ENCODE measurements at regions of chr13 and their contacts with region 1.

Region 1: DNA sequence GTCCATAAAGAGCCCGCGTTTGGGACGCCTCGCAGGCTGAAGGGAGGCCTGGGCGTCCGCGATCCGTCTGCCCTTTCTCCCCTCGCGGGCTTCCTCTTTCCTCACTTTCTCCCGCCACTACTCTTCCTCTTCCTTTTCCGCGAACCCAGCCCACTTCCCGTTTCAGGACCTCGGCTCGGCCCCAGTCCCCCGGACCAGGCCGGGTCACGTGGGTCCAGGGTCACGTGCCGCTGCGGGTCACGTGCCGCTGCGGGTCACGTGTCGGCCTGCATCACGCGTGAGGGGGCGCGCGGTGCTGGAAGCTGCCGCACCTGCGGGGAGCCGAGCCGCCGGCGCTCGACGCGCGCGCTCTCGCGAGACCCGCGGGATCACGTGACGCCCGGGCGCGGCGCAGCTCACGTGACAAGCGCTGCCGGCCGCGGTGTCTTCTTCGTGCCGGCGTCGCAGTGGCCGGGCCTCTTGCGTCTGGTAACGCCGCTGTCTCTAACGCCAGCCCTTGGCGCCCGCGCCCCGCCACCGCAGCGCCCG is at the start of gene LAMP1:
- DNase-seq: peak; percentile 99
- ATAC-seq: peak; percentile 88
- H3K4me3 Mint-ChIP-seq: peak within 1 kb of the TSS; percentile 89
- H3K27ac Mint-ChIP-seq: peak within 1 kb of the TSS; percentile 100
- H3K4me1 Mint-ChIP-seq: peaks cover 31% of the 10 kb centered on the region
- H3K27me3 Mint-ChIP-seq: peaks cover 10% of the 10 kb centered on the region
- total RNA-seq, gene LAMP1: 32.2 to 36.0 TPM

Region 2: GRCh38 chr13:112893570-112894422 is 403.1 kb before region 1 on chr13:
- CTCF ChIA-PET with region 1: no interaction called
- POLR2A ChIA-PET with region 1: no interaction called
- intact Hi-C with region 1: no loop called
- DNase-seq: peak; percentile 59
- ATAC-seq: peak; percentile 78
- H3K4me3 Mint-ChIP-seq: no peak overlapping the region
- H3K27ac Mint-ChIP-seq: no peak overlapping the region
- H3K4me1 Mint-ChIP-seq: no peaks in the 10 kb centered on the region
- H3K27me3 Mint-ChIP-seq: peaks cover 6% of the 10 kb centered on the region

Region 3: GRCh38 chr13:112942689-112943308 is 354.1 kb before region 1 on chr13:
- CTCF ChIA-PET with region 1: no interaction called
- POLR2A ChIA-PET with region 1: interaction called, 4 read pairs
- intact Hi-C with region 1: loop called in 1 of 2 experiments (anchors 2 kb)
- DNase-seq: peak; percentile 98
- ATAC-seq: peak; percentile 98
- H3K4me3 Mint-ChIP-seq: peak overlapping the region; percentile 73
- H3K27ac Mint-ChIP-seq: peak overlapping the region; percentile 28
- H3K4me1 Mint-ChIP-seq: peaks cover 7% of the 10 kb centered on the region
- H3K27me3 Mint-ChIP-seq: peaks cover 18% of the 10 kb centered on the region

Region 4: DNA sequence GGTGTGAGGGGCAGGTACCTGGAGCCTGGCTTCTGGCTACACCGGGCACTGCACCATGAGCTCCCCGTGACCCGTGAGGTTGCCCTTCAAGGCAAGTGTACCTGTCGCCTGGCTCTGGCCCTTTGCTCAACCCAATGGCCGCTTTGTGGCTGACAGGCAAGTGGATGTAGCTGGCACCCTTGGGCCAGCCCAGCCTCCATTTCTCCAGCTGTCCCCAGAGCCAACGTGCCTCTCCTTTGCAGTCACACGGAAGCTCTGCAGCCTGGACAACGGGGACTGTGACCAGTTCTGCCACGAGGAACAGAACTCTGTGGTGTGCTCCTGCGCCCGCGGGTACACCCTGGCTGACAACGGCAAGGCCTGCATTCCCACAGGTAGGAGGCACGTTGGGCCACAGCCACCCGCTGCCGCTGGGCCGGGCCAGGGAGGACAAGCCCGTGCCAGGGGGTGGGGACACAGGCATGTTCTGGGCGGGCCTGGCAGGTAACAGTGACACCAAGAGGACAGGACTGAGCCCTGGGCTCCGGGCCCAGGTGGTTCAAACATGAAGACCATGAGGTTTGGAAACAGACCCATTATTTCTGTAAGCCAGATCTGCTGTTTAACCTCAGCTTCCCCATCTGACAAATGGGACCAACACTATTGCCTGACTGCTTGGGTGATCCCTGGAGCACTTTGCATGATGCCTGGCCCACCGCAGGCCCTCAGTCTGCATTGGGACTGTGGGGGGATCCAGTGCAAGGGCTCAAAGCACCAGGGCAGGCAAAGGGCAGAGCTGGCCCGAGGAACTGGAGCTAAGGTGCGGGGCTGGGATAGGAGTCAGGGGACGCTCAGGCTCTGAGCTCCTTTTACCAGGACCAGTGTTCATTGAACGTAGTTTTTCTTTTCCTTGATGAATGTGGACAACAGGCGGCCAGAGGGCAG is 156.0 kb before region 1 on chr13:
- CTCF ChIA-PET with region 1: no interaction called
- POLR2A ChIA-PET with region 1: no interaction called
- intact Hi-C with region 1: no loop called
- DNase-seq: no peak
- ATAC-seq: no peak
- H3K4me3 Mint-ChIP-seq: no peak overlapping the region
- H3K27ac Mint-ChIP-seq: no peak overlapping the region
- H3K4me1 Mint-ChIP-seq: peaks cover 8% of the 10 kb centered on the region
- H3K27me3 Mint-ChIP-seq: no peaks in the 10 kb centered on the region

Region 5: GRCh38 chr13:113153810-113154748 is 142.8 kb before region 1 on chr13:
- CTCF ChIA-PET with region 1: interaction called, 3 read pairs
- POLR2A ChIA-PET with region 1: no interaction called
- intact Hi-C with region 1: loop called in 1 of 2 experiments (anchors 5 kb)
- DNase-seq: peak; percentile 80
- ATAC-seq: peak; percentile 72
- H3K4me3 Mint-ChIP-seq: peak overlapping the region; percentile 67
- H3K27ac Mint-ChIP-seq: no peak overlapping the region
- H3K4me1 Mint-ChIP-seq: peaks cover 17% of the 10 kb centered on the region
- H3K27me3 Mint-ChIP-seq: peaks cover 13% of the 10 kb centered on the region

Region 6: GRCh38 chr13:113393563-113394338 is 96.8 kb after region 1 on chr13:
- CTCF ChIA-PET with region 1: interaction called, 4 read pairs
- POLR2A ChIA-PET with region 1: no interaction called
- intact Hi-C with region 1: loop called in 1 of 2 experiments (anchors 1 kb)
- DNase-seq: peak; percentile 92
- ATAC-seq: peak; percentile 94
- H3K4me3 Mint-ChIP-seq: peak overlapping the region; percentile 91
- H3K27ac Mint-ChIP-seq: peak overlapping the region; percentile 85
- H3K4me1 Mint-ChIP-seq: peaks cover 4% of the 10 kb centered on the region
- H3K27me3 Mint-ChIP-seq: no peaks in the 10 kb centered on the region

Region 7: GRCh38 chr13:113584205-113584869 is 287.4 kb after region 1 on chr13 and contains the start of gene TFDP1:
- CTCF ChIA-PET with region 1: no interaction called
- POLR2A ChIA-PET with region 1: no interaction called
- intact Hi-C with region 1: loop called in 1 of 2 experiments (anchors 1 kb)
- DNase-seq: peak; percentile 93
- ATAC-seq: peak; percentile 92
- H3K4me3 Mint-ChIP-seq: peak within 1 kb of the TSS; percentile 90
- H3K27ac Mint-ChIP-seq: peak within 1 kb of the TSS; percentile 80
- H3K4me1 Mint-ChIP-seq: peaks cover 36% of the 10 kb centered on the region
- H3K27me3 Mint-ChIP-seq: no peaks in the 10 kb centered on the region
- total RNA-seq, gene TFDP1: 159 to 175 TPM